AG04450 (cell line): ENCODE measurements at regions of chr15 and their contacts with region 1.

Region 1: DNA sequence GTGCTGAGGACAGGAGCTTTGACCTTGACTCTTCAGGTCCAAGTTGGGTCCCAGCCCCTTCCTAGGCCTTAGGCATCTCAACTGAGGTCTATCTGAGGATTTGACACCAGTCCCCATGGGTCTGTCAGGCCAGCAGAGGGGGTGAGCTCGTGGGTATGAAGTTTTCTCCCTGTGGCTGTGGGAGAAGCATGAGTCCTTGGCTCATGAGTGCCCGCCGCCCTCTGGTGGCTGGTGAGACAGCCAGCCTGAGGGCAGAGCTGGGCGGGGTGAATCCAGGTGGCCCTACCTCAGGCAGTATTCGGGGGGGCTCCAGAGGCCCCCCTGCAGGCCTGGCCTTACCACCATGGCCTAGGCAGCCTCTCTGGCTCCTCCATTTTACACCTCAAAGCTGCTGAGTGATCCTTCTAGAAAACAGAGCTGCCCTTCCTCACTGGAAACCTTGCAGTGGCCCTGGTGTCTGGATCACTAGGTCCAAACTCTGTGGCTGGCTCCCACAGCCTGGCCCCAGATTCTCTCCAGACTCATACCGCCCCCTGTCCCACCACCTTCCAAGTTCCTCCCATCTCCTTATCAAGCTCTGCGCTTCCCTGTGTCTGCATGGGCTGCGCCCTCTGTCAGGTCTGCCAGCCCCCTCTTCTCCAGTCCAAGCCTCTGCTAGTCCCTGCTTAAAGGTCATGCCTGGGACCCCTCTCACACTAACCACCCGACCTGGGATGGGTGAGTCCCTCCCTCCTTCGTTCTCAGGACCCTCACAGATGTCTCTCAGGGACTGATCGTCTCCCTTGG is 16.1 kb downstream of the SH2D7 start:
- DNase-seq: peak; percentile 71
- H3K4me3 ChIP-seq: no peak overlapping the region
- H3K27ac ChIP-seq: peak overlapping the region; percentile 21
- H3K27me3 ChIP-seq: no peaks in the 10 kb centered on the region
- CTCF ChIP-seq: peak; percentile 97

Region 2: DNA sequence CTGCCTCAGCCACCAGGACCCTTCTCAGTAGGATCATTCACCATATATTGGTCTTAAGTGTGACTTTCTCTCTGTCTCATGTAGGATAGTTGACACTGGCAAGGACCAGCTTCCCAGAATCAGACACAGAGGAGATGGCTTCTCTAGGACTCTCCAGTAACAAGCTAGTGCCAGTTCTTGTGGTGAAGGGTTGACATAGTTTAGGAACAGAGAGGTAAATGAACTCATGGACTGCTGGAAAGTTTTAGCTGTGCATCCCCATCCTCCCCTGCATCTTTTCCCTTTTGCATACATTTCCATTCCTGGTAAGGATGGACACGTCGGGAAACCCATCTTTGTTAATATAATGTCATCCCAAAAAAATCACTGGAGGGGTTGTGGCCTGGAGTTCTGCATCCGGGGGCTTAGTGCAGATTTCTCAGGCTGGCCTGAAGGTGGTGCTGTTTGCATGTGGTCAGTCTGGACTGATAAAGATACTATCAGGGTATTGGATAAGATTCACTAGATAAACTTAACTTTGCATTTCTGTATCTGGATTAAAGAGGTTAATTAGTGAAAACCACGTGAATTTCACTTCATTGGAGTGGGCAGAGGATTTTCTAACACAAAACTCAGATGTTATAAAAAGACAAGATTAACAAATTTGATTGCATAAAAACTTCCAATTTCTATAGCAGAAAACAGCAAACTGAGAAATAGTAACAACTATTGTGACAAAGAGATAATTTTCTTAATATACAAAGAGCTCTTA is 141.8 kb before region 1 on chr15:
- CTCF ChIA-PET with region 1: interaction called, 327 read pairs
- POLR2A ChIA-PET with region 1: no interaction called
- DNase-seq: peak; percentile 11
- H3K4me3 ChIP-seq: no peak overlapping the region
- H3K27ac ChIP-seq: no peak overlapping the region
- H3K27me3 ChIP-seq: peaks cover 18% of the 10 kb centered on the region
- CTCF ChIP-seq: peak; percentile 94

Region 3: DNA sequence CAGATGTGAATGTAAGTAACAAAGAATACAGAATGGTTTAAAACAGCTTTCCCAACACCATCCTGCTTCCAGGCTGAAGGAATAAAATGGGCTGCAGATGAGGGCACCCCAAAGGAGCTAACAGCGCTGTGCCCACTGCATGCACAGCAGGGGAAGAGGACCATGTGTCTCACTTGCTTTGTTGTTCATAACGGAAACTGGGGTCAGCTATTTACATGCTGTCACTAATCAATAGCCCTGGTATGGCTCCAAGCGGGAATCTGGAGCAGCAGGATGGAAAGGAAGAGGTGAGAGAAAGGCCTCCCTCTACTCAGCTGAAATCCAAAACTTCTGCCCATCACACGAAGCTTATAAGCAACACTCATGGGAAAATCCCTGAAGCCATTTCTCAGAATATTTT is 98.4 kb before region 1 on chr15:
- CTCF ChIA-PET with region 1: interaction called, 36 read pairs
- POLR2A ChIA-PET with region 1: no interaction called
- DNase-seq: no peak
- H3K4me3 ChIP-seq: no peak overlapping the region
- H3K27ac ChIP-seq: no peak overlapping the region
- H3K27me3 ChIP-seq: no peaks in the 10 kb centered on the region
- CTCF ChIP-seq: no peak

Region 4: DNA sequence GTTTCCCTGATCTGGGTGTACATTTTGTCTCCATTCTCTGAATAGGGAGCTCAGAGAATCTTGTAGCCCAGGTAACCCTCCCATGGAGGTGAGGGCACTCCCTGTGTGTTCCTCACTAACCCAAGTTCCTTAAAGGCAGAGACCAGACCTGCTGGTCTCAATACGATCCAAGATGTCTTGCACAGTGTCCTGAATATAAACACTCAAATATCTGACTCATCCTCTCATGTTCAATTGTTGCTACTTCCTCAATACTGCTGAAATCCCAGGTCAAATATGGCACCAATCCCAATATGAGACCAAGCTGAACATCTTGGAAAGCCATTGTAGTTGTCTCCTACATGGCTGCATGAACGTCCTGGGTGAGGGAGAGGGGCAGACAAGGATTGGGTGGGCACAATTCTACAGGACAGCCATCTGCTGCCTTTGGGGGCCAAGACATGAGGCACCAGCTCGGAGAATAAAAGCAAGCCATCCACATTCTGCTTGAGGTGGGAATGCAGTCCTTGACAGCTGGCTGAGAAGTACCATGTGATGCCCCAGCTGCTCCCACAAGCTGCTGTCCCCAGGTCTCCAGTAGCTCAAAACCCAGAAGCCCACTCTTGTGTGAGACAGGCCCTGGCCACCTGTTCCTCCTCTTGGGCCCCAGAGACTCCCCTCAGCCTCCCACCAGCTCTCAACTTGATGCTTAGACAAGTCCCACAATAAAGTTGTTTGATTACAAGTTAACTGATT is 49.2 kb before region 1 on chr15:
- CTCF ChIA-PET with region 1: interaction called, 14 read pairs
- POLR2A ChIA-PET with region 1: no interaction called
- DNase-seq: no peak
- H3K4me3 ChIP-seq: no peak overlapping the region
- H3K27ac ChIP-seq: peak overlapping the region; percentile 23
- H3K27me3 ChIP-seq: no peaks in the 10 kb centered on the region
- CTCF ChIP-seq: no peak

Region 5: GRCh38 chr15:78093242-78094020 is 15.1 kb before region 1 on chr15:
- CTCF ChIA-PET with region 1: interaction called, 26 read pairs
- POLR2A ChIA-PET with region 1: interaction called, 6 read pairs
- DNase-seq: peak; percentile 92
- H3K4me3 ChIP-seq: no peak overlapping the region
- H3K27ac ChIP-seq: peak overlapping the region; percentile 40
- H3K27me3 ChIP-seq: peaks cover 12% of the 10 kb centered on the region
- CTCF ChIP-seq: no peak

Region 6: GRCh38 chr15:78131295-78132061 is 23.0 kb after region 1 on chr15 and contains the start of gene CIB2:
- CTCF ChIA-PET with region 1: interaction called, 16 read pairs
- POLR2A ChIA-PET with region 1: no interaction called
- DNase-seq: peak; percentile 7
- H3K4me3 ChIP-seq: peak within 1 kb of the TSS; percentile 74
- H3K27ac ChIP-seq: no peak within 1 kb of the TSS
- H3K27me3 ChIP-seq: no peaks in the 10 kb centered on the region
- CTCF ChIP-seq: peak; percentile 48
- polyA plus RNA-seq, gene CIB2: 2.7 and 3.7 TPM in 2 replicates

Region 7: DNA sequence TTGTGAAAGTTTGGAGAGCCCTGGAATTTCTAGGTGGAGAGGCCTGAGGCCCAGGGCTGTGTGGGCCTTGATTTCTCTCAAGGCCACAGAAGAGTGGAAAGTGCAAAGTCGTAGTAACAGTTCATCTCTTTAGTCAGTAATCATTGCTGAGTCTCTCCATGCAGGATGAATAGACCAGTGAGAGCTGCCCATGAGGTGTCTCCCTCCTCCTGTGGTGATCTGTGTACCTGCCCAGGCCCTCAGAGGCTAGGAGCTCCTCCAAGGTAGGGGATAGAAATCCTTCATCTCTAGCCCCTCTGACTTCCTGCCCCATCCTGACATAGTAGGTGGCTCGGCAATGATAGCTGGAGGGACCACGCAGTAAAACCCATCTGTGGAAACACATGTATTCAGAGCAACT is 33.8 kb after region 1 on chr15:
- CTCF ChIA-PET with region 1: no interaction called
- POLR2A ChIA-PET with region 1: no interaction called
- DNase-seq: no peak
- H3K4me3 ChIP-seq: no peak overlapping the region
- H3K27ac ChIP-seq: no peak overlapping the region
- H3K27me3 ChIP-seq: peaks cover 3% of the 10 kb centered on the region
- CTCF ChIP-seq: no peak

Region 8: GRCh38 chr15:78241007-78241406 is 132.5 kb after region 1 on chr15:
- CTCF ChIA-PET with region 1: interaction called, 157 read pairs
- POLR2A ChIA-PET with region 1: no interaction called
- DNase-seq: peak; percentile 33
- H3K4me3 ChIP-seq: no peak overlapping the region
- H3K27ac ChIP-seq: no peak overlapping the region
- H3K27me3 ChIP-seq: peaks cover 21% of the 10 kb centered on the region
- CTCF ChIP-seq: peak; percentile 89